ENCODE measurements at regions of chr9 and their contacts with region 1.

Region 1: DNA sequence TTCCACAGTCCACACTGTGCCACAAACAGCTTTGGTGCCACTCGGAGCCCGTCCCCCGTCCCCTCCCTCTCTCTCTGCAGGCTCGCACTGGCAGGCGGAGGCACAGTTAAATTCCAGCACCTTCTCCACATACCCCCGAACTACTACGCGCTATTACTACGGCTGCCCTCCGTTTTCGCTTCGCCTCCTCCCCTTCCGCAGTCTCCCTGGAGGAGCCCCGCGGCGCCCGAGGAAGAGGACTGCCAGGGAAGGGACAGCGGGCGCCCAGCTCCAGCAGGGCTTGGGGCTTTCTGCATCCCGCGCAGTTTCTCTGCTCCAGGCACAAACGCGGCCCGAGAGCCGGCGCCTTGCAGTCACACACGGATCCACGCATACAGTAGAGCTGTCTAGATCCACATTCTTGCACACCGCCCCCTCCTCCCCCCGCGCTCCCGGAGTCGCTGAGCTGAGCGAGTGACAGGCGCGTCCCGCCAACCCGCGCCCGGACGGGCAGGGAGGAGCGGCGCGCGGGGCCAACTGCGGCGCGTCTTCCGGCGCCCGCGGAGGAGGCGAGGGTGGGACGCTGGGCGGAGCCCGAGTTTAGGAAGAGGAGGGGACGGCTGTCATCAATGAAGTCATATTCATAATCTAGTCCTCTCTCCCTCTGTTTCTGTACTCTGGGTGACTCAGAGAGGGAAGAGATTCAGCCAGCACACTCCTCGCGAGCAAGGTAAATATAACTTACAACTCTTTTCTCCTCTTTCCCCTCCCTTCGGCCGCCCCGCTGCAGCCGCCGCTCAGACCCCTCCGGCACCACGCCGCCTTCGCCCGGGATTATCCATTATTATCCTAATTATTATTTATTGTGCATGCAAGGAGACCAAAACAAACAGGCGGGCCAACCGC is at the start of gene SMARCA2:
- DNase-seq: peak; percentile 82 to 94 (median 84)
- ATAC-seq: peak; percentile 88
- H3K4me3 ChIP-seq: peak within 1 kb of the TSS; percentile 71
- H3K27ac ChIP-seq: peak within 1 kb of the TSS; percentile 93
- H3K4me1 ChIP-seq: peaks cover 12 to 16% of the 10 kb centered on the region in 2 experiments; a peak in 4 of 5 replicates
- H3K27me3 ChIP-seq: no peaks in the 10 kb centered on the region
- CTCF ChIP-seq: no peak
- EP300 ChIP-seq: no peak; the same call in 1 of the 2 replicates
- POLR2A ChIP-seq: peak; percentile 76
- RAD21 ChIP-seq: no peak
- polyA plus RNA-seq, gene SMARCA2: 8.0 to 8.3 TPM

Region 2: GRCh38 chr9:2027631-2028131 is 12.7 kb after region 1 on chr9:
- CTCF ChIA-PET with region 1: no interaction called
- POLR2A ChIA-PET with region 1: interaction called, 11 read pairs
- in situ Hi-C with region 1: no loop called
- intact Hi-C with region 1: no loop called
- DNase-seq: no peak
- ATAC-seq: no peak
- H3K4me3 ChIP-seq: no peak overlapping the region
- H3K27ac ChIP-seq: no peak overlapping the region; the same call in 2 of the 3 replicates
- H3K4me1 ChIP-seq: peaks cover 8 to 58% of the 10 kb centered on the region in 2 experiments
- H3K27me3 ChIP-seq: no peaks in the 10 kb centered on the region
- CTCF ChIP-seq: no peak
- EP300 ChIP-seq: no peak
- POLR2A ChIP-seq: no peak
- RAD21 ChIP-seq: no peak

Region 3: DNA sequence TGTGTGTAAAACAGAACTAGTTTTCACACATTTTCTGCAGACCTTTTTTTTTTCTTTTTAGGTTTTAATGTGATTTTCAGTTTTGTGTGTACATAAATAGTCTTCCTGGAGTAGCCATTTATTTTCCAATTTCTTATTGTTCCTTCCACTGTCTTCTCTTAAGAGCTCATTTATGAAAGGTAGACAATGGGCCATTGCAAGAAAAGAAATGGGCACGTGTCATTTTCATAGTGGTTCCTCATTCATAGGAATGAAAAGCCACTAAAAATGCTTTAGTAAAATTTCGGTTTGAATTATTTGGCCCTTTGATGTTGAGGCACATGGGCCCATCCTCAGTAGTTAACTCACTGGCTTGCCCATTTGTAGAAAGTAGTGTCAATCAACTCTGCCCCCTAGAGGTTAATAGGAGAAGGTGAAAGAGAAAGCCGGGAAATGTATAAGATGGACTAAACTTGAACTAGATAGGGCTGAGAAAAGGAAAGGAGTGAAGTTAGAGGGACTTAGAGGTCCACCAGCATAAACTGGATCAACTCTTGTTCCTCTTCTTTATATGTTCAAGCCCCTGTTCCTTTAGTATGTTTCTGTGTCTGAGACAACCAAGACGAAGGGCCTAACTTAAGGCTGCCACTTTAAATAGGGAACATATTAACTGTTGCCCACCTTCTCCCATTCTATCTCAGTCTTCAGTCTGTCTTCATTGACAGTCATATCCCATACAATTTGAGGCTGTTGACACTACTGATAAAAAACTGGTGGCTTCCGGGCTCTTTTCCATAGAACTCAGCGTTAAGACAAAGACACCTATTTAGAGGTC is 72.8 kb after region 1 on chr9:
- CTCF ChIA-PET with region 1: no interaction called
- POLR2A ChIA-PET with region 1: no interaction called
- in situ Hi-C with region 1: no loop called
- intact Hi-C with region 1: loop called (anchors 10 kb)
- DNase-seq: peak; percentile 30 to 50 (median 40)
- ATAC-seq: peak; percentile 83
- H3K4me3 ChIP-seq: no peak overlapping the region
- H3K27ac ChIP-seq: no peak overlapping the region
- H3K4me1 ChIP-seq: no peaks in the 10 kb centered on the region
- H3K27me3 ChIP-seq: no peaks in the 10 kb centered on the region
- CTCF ChIP-seq: peak in 2 of 3 experiments; percentile 46 to 50; a peak in 3 of 6 replicates
- EP300 ChIP-seq: no peak
- POLR2A ChIP-seq: no peak
- RAD21 ChIP-seq: peak; percentile 43 to 52

Region 4: DNA sequence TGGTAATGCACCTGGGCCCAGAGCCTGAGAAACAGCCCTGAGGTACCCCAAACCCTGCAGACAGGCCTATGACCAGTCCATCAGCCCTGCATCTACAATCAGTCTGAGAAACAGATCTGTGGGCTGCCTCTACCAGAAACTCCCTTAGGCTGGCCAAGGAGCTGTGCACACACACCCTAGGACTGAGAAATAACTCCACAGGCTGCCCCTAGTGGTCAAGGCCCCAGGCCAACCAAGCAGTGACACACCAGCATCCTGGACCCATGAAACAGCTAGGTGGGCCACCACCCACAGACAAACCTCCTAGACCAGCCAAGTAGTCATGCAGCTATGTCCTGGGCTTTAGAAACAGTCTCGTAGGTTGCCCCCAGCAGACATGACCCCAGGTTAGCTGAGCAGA is 353.0 kb after region 1 on chr9:
- CTCF ChIA-PET with region 1: no interaction called
- POLR2A ChIA-PET with region 1: no interaction called
- in situ Hi-C with region 1: no loop called
- intact Hi-C with region 1: no loop called
- DNase-seq: peak in 1 of 4 experiments; percentile 0
- ATAC-seq: no peak
- H3K4me3 ChIP-seq: no peak overlapping the region
- H3K27ac ChIP-seq: no peak overlapping the region
- H3K4me1 ChIP-seq: no peaks in the 10 kb centered on the region
- H3K27me3 ChIP-seq: no peaks in the 10 kb centered on the region
- CTCF ChIP-seq: no peak
- EP300 ChIP-seq: no peak
- POLR2A ChIP-seq: no peak
- RAD21 ChIP-seq: no peak